ENCODE measurements at regions of chr5 and their contacts with region 1.

Region 1: GRCh38 chr5:143659718-143660152 is 152.2 kb upstream of the HMHB1 start:
- DNase-seq: peak; percentile 40 to 73
- H3K4me3 ChIP-seq: no peak overlapping the region
- H3K4me3 Mint-ChIP-seq: peak overlapping the region; percentile 30
- H3K27ac Mint-ChIP-seq: peak overlapping the region; percentile 88
- H3K4me1 ChIP-seq: peaks cover 32% of the 10 kb centered on the region
- H3K4me1 Mint-ChIP-seq: peaks cover 17% of the 10 kb centered on the region
- H3K27me3 ChIP-seq: no peaks in the 10 kb centered on the region
- H3K27me3 Mint-ChIP-seq: no peaks in the 10 kb centered on the region
- CTCF ChIP-seq: no peak

Region 2: DNA sequence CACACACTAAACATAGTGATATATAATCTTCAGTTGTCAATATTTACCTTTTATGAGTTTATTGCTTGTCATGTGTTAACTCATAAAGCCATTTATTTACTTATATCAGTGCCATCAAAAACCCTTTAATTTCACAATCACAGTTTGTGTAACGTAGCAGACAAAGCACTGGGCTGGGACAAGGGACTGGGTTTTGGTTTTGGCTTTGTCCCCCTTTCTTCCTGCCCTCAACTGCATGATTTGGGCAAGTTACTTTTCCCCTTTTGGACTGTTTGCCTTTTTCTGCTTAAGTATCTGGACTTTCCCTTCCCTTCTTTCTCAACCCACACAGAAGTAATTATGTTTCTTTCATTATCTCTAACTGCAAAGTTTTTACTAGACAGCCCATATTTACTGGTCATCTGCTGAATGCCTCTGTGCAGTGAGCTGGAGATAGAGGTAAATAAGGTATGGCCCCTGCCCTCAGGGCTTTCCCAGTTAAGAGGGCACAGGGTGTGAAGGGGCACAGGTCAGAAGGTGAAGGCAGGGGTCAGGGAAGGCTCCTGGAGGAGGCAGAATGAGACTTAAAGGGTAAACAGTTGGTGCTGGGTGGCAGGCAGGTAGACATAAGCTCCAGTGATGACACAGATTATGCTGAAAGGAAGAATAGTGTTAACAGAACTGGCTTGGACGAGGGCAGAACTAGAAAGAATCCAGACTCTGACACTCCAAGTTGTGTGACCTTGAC is 241.4 kb before region 1 on chr5:
- CTCF ChIA-PET with region 1: no interaction called
- POLR2A ChIA-PET with region 1: no interaction called
- intact Hi-C with region 1: loop called (anchors 1 kb)
- DNase-seq: peak; percentile 59 to 73
- H3K4me3 ChIP-seq: no peak overlapping the region
- H3K4me3 Mint-ChIP-seq: peak overlapping the region; percentile 4
- H3K27ac Mint-ChIP-seq: peak overlapping the region; percentile 27
- H3K4me1 ChIP-seq: peaks cover 33% of the 10 kb centered on the region
- H3K4me1 Mint-ChIP-seq: peaks cover 28% of the 10 kb centered on the region
- H3K27me3 ChIP-seq: no peaks in the 10 kb centered on the region
- H3K27me3 Mint-ChIP-seq: no peaks in the 10 kb centered on the region
- CTCF ChIP-seq: no peak

Region 3: GRCh38 chr5:143569213-143570082 is 90.3 kb before region 1 on chr5:
- CTCF ChIA-PET with region 1: no interaction called
- POLR2A ChIA-PET with region 1: no interaction called
- intact Hi-C with region 1: loop called (anchors 1 kb)
- DNase-seq: peak; percentile 52 to 60
- H3K4me3 ChIP-seq: no peak overlapping the region
- H3K4me3 Mint-ChIP-seq: peak overlapping the region; percentile 49
- H3K27ac Mint-ChIP-seq: peak overlapping the region; percentile 89
- H3K4me1 ChIP-seq: peaks cover 33% of the 10 kb centered on the region
- H3K4me1 Mint-ChIP-seq: peaks cover 36% of the 10 kb centered on the region
- H3K27me3 ChIP-seq: no peaks in the 10 kb centered on the region
- H3K27me3 Mint-ChIP-seq: no peaks in the 10 kb centered on the region
- CTCF ChIP-seq: no peak

Region 4: GRCh38 chr5:143635146-143635752 is 24.5 kb before region 1 on chr5:
- CTCF ChIA-PET with region 1: no interaction called
- POLR2A ChIA-PET with region 1: interaction called, 3 read pairs
- intact Hi-C with region 1: loop called (anchors 1 kb)
- DNase-seq: peak; percentile 20 to 46
- H3K4me3 ChIP-seq: no peak overlapping the region
- H3K4me3 Mint-ChIP-seq: no peak overlapping the region
- H3K27ac Mint-ChIP-seq: peak overlapping the region; percentile 28
- H3K4me1 ChIP-seq: peaks cover 54% of the 10 kb centered on the region
- H3K4me1 Mint-ChIP-seq: peaks cover 57% of the 10 kb centered on the region
- H3K27me3 ChIP-seq: no peaks in the 10 kb centered on the region
- H3K27me3 Mint-ChIP-seq: no peaks in the 10 kb centered on the region
- CTCF ChIP-seq: no peak

Region 5: GRCh38 chr5:143679777-143680176 is 20.0 kb after region 1 on chr5:
- CTCF ChIA-PET with region 1: no interaction called
- POLR2A ChIA-PET with region 1: no interaction called
- intact Hi-C with region 1: loop called (anchors 1 kb)
- DNase-seq: no peak
- H3K4me3 ChIP-seq: no peak overlapping the region
- H3K4me3 Mint-ChIP-seq: no peak overlapping the region
- H3K27ac Mint-ChIP-seq: peak overlapping the region; percentile 17
- H3K4me1 ChIP-seq: peaks cover 46% of the 10 kb centered on the region
- H3K4me1 Mint-ChIP-seq: peaks cover 34% of the 10 kb centered on the region
- H3K27me3 ChIP-seq: no peaks in the 10 kb centered on the region
- H3K27me3 Mint-ChIP-seq: no peaks in the 10 kb centered on the region
- CTCF ChIP-seq: no peak

Measured in Caco-2 (cell line).